Caco-2 (cell line): ENCODE measurements at regions of chr3 and their contacts with region 1.

Region 1: DNA sequence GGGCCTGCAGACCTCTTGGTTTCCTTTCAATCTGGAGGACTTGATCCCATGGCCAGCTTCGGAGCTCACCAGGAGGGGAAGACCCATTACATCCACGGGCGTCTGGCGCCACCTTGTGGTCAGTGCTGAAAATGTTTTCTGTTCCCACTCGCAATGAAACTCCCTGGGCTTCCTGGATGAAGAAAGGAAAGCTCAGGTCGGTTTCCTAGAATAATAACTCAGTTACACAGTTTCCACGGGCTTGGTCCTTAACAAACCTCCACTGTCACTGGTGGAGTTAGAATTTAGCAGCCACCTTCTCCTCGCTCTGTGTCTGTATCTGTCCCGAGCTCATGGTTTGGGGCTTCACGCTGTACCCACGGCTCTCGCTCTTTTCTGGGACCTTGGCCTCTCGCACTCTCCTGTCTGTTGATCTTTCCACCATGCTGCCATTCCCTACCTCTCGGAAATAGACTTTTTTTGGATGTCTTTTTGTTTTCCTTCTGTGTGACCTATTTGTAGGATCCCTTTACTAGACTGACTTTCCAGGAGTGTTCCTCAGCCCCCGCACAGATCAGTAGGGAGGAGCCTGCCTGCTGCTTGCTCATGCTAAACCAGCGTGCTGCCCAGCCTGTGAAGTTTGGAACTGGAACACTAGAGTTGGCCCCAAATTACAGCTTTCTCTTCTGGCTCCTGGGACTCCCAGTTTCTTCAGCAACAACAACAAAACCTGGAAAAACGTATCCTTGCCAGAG is 56.3 kb downstream of the IL20RB start:
- DNase-seq: peak; percentile 85 to 90
- H3K4me3 ChIP-seq: peak overlapping the region; percentile 52
- H3K4me3 Mint-ChIP-seq: peak overlapping the region; percentile 88
- H3K27ac Mint-ChIP-seq: peak overlapping the region; percentile 87
- H3K4me1 ChIP-seq: 0 out of 2 replicates have a peak, but pooled peaks cover 3% of the 10 kb centered on the region
- H3K4me1 Mint-ChIP-seq: no peaks in the 10 kb centered on the region
- H3K27me3 ChIP-seq: no peaks in the 10 kb centered on the region
- H3K27me3 Mint-ChIP-seq: no peaks in the 10 kb centered on the region
- CTCF ChIP-seq: peak; percentile 70 to 90

Region 2: DNA sequence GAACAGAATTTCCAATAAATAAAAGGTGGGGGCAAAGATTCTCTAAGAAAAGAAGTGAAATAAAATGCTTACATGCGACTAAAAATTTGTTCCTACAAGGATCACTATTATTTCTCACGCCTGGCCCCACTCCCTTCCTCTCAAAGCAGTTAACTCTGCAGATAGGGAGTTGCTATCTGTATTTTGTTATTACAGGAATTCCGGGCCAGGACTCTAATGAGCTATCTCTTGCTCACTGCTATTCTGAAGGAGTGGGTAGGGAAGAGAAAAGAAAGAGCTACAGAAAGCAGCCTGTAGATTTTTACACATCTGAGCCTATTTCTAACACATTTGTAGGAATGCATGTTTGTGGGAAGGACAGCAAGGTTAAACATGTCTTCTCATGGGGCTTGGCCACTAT is 623.5 kb before region 1 on chr3:
- CTCF ChIA-PET with region 1: interaction called, 10 read pairs
- POLR2A ChIA-PET with region 1: no interaction called
- intact Hi-C with region 1: loop called (anchors 1 kb)
- DNase-seq: no peak
- H3K4me3 ChIP-seq: no peak overlapping the region
- H3K4me3 Mint-ChIP-seq: no peak overlapping the region
- H3K27ac Mint-ChIP-seq: no peak overlapping the region
- H3K4me1 ChIP-seq: no peaks in the 10 kb centered on the region
- H3K4me1 Mint-ChIP-seq: no peaks in the 10 kb centered on the region
- H3K27me3 ChIP-seq: no peaks in the 10 kb centered on the region
- H3K27me3 Mint-ChIP-seq: no peaks in the 10 kb centered on the region
- CTCF ChIP-seq: no peak

Region 3: DNA sequence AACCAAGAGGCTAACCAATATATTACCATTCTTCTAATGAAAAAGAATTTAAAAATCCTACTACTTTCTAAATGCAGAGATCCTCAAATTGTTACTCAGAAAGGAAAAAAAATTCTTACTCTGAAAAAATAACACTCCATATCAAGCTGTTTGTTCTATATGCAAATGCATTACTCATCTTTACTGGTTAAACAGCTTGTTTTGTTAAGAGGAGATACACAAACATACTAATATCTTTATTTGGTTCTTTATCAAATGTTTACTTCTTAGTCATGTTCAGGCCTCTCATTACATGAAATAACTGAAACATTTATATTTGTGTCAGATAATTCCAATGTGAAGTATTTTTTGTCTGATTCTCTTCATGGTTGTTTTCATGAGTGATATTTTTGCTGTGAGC is 617.2 kb before region 1 on chr3:
- CTCF ChIA-PET with region 1: interaction called, 10 read pairs
- POLR2A ChIA-PET with region 1: no interaction called
- intact Hi-C with region 1: no loop called
- DNase-seq: no peak
- H3K4me3 ChIP-seq: no peak overlapping the region
- H3K4me3 Mint-ChIP-seq: no peak overlapping the region
- H3K27ac Mint-ChIP-seq: no peak overlapping the region
- H3K4me1 ChIP-seq: no peaks in the 10 kb centered on the region
- H3K4me1 Mint-ChIP-seq: no peaks in the 10 kb centered on the region
- H3K27me3 ChIP-seq: no peaks in the 10 kb centered on the region
- H3K27me3 Mint-ChIP-seq: no peaks in the 10 kb centered on the region
- CTCF ChIP-seq: no peak

Region 4: DNA sequence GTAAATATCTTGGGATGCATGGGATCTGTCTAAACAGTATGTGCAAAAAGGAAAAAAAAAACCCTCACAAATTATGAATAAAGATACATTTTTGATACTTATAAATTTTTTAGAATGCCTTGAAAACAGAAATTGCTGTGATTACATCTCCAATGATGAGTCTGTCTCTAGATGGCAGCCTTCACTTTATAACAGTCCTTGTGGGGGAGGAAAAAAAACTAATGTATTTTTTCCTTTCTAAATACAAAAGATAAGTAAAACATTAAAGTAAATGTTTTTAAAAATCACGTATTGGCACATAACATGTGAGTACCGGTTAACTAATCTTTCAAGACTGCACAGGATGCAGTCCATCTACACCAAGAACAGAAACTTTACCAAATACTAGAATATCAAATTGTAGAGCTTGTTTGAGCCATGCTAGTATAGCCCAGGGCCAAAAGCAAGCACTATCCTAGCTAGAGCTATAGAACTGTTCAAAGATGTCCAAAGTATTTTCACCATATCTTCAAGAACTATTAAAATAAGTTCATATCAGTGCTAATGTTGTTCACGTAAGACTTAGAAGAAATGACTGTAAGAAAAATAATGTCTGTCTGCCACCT is 468.4 kb before region 1 on chr3:
- CTCF ChIA-PET with region 1: interaction called, 8 read pairs
- POLR2A ChIA-PET with region 1: no interaction called
- intact Hi-C with region 1: loop called (anchors 1 kb)
- DNase-seq: no peak
- H3K4me3 ChIP-seq: no peak overlapping the region
- H3K4me3 Mint-ChIP-seq: no peak overlapping the region
- H3K27ac Mint-ChIP-seq: no peak overlapping the region
- H3K4me1 ChIP-seq: 0 out of 2 replicates have a peak, but pooled peaks cover 8% of the 10 kb centered on the region
- H3K4me1 Mint-ChIP-seq: peaks cover 10% of the 10 kb centered on the region
- H3K27me3 ChIP-seq: no peaks in the 10 kb centered on the region
- H3K27me3 Mint-ChIP-seq: no peaks in the 10 kb centered on the region
- CTCF ChIP-seq: peak; percentile 10 to 30

Region 5: DNA sequence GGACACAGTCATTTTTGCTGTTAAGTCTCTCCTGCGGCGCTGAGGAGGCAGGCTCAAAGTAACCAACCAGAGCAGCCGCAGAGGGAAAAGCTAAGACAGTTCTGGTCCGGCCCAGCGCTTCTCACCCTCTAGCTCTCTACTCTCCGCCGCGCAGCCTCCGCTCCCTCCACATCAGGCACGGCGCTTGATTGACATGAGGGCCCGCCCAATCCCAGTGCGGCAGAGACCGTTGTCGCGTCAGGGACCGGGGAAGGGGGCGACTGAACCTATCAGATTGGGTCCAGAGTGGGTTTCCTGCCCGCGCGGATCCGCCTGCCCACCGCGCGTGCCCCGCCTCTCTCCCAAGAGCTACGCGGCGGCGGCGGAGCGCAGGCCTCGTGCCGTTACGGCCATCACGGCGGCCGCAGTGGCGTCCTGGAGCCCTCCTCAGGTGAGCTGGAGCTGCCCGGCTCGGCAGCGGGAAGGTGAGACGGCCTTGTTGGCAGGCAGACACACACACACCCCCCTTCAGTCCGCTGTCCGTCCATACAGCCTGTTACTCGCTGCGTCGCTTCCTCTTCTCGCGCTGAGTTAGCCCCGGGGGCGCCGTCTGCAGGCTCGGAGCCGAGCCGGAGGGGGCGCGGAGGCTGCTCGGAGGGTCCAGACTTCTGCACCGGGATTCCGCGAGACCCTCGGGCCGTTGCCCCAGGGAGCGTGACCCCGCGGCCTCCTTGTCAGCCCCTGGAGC is 152.1 kb before region 1 on chr3 and contains the start of gene NCK1:
- CTCF ChIA-PET with region 1: interaction called, 11 read pairs
- POLR2A ChIA-PET with region 1: interaction called, 10 read pairs
- intact Hi-C with region 1: loop called (anchors 1 kb)
- DNase-seq: peak; percentile 98 to 99
- H3K4me3 ChIP-seq: peak within 1 kb of the TSS; percentile 95
- H3K4me3 Mint-ChIP-seq: peak within 1 kb of the TSS; percentile 94
- H3K27ac Mint-ChIP-seq: peak within 1 kb of the TSS; percentile 94
- H3K4me1 ChIP-seq: peaks cover 18% of the 10 kb centered on the region; the same call in 1 of the 2 replicates
- H3K4me1 Mint-ChIP-seq: peaks cover 20% of the 10 kb centered on the region
- H3K27me3 ChIP-seq: no peaks in the 10 kb centered on the region
- H3K27me3 Mint-ChIP-seq: no peaks in the 10 kb centered on the region
- CTCF ChIP-seq: no peak
- total RNA-seq, gene NCK1: 37.3 and 41.2 TPM in 2 replicates

Region 6: GRCh38 chr3:136949708-136950107 is 64.4 kb before region 1 on chr3:
- CTCF ChIA-PET with region 1: interaction called, 5 read pairs
- POLR2A ChIA-PET with region 1: no interaction called
- intact Hi-C with region 1: loop called (anchors 2 kb)
- DNase-seq: no peak
- H3K4me3 ChIP-seq: no peak overlapping the region
- H3K4me3 Mint-ChIP-seq: no peak overlapping the region
- H3K27ac Mint-ChIP-seq: no peak overlapping the region
- H3K4me1 ChIP-seq: peaks cover 20% of the 10 kb centered on the region
- H3K4me1 Mint-ChIP-seq: peaks cover 14% of the 10 kb centered on the region
- H3K27me3 ChIP-seq: no peaks in the 10 kb centered on the region
- H3K27me3 Mint-ChIP-seq: no peaks in the 10 kb centered on the region
- CTCF ChIP-seq: peak in 1 of 2 experiments; percentile 5